ENCODE measurements at regions of chr4 and their contacts with region 1.

Region 1: GRCh38 chr4:151604238-151604637 is 156.6 kb downstream of the GATB start:
- DNase-seq: peak; percentile 27
- H3K4me3 ChIP-seq: no peak overlapping the region
- CTCF ChIP-seq: peak; percentile 61

Region 2: DNA sequence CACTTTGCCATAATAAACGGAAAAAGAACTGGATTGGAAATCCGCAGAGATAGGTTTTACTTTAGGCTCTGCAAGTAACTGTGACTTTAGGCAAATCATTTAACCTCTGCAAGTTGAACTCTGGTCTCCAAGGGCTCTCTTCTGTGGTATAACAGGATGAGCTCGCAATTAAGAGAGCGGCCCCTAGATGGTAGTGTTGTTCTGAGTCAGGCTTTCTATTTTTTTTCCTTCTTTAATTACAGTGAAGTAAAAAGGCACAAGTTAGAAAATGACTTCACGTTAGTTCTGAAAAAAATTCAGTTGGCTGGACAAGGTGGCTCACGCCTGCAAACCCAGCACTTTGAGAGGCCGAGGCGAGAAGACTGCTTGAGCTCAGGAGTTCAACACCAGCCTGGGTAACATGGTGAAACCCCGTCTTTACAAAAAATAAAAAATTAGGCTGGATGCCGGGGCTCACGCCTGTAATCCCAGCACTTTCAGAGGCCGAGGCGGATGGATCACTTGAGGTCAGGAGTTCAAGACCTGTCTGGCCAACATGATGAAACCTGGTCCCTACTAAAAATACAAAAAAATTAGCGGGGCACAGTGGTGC is 486.8 kb before region 1 on chr4:
- in situ Hi-C with region 1: loop called (anchors 25 kb)
- DNase-seq: peak; percentile 49
- H3K4me3 ChIP-seq: no peak overlapping the region
- CTCF ChIP-seq: peak; percentile 77